IMR-90 (cell line): ENCODE measurements at regions of chr3 and their contacts with region 1.

Region 1: DNA sequence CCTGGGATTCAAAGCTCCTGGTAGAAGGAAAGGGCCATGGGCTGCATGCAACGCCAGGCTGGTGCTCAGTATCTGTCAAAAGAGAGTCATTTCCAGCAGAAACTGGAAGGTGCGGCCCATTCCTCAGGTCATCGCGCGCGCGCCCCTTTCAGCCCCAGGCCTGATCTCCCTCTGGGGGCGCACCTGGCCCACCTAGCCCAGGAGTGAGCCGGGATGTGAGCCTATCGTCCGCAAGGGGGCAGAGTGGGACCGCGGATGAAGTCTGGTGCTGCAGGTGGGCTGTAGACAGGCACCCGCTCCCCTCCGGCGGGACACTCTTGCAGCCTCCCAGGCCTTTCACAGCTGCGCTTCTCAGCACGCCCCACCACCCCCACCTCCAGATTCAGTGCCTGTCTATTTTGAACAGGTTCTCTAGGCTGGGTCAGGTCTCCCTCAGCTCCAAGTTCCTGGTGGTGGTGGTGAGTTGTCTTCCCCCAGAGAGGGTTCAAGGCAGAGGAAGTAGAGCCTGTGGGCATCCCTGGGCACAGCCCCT is 5.8 kb upstream of the RPL29 start:
- DNase-seq: peak; percentile 43
- ATAC-seq: peak; percentile 75
- H3K4me3 ChIP-seq: no peak overlapping the region
- H3K27ac ChIP-seq: no peak overlapping the region
- H3K4me1 ChIP-seq: peaks cover 11% of the 10 kb centered on the region
- H3K27me3 ChIP-seq: no peaks in the 10 kb centered on the region
- CTCF ChIP-seq: peak; percentile 96
- POLR2A ChIP-seq: peak; percentile 54; the same call in 1 of the 2 replicates
- RAD21 ChIP-seq: peak; percentile 97

Region 2: DNA sequence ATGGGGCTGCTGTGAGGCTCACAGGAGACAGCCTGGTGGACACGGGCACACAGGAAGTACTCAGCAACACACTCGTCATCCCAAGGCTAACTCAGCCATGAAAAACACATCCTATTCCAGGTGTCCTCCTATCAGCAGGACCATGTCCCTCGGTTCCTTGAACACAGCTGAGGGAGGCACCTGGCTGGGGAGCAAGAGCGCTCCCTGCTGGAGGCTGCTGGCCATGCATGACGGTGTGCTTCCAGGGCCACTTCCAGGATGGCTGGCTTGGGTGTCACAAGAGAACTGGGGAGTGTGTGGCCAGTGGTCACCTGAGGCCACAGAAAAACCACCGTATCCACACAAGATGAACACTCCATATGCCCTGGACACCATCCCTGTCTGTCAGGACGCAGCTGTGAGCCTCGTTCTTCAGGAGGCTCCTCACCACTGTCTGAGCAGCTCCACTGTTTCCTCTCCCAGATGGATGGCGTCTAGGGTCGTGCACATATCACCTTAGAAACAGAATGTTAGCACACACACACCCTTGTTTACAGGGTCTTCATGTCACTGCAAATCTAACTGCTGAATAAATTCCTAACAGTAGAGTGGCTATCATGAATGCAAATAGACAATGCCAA is 121.7 kb after region 1 on chr3:
- CTCF ChIA-PET with region 1: interaction called, 12 read pairs
- POLR2A ChIA-PET with region 1: no interaction called
- dilution Hi-C with region 1: no loop called
- in situ Hi-C with region 1: loop called (anchors 5 kb)
- intact Hi-C with region 1: loop called (anchors 1 kb)
- DNase-seq: peak; percentile 65
- ATAC-seq: peak; percentile 97
- H3K4me3 ChIP-seq: no peak overlapping the region
- H3K27ac ChIP-seq: no peak overlapping the region
- H3K4me1 ChIP-seq: peaks cover 2% of the 10 kb centered on the region
- H3K27me3 ChIP-seq: no peaks in the 10 kb centered on the region
- CTCF ChIP-seq: peak; percentile 94
- POLR2A ChIP-seq: 0 out of 2 replicates have a peak, but pooled peaks have one; percentile 40
- RAD21 ChIP-seq: peak; percentile 98

Region 3: DNA sequence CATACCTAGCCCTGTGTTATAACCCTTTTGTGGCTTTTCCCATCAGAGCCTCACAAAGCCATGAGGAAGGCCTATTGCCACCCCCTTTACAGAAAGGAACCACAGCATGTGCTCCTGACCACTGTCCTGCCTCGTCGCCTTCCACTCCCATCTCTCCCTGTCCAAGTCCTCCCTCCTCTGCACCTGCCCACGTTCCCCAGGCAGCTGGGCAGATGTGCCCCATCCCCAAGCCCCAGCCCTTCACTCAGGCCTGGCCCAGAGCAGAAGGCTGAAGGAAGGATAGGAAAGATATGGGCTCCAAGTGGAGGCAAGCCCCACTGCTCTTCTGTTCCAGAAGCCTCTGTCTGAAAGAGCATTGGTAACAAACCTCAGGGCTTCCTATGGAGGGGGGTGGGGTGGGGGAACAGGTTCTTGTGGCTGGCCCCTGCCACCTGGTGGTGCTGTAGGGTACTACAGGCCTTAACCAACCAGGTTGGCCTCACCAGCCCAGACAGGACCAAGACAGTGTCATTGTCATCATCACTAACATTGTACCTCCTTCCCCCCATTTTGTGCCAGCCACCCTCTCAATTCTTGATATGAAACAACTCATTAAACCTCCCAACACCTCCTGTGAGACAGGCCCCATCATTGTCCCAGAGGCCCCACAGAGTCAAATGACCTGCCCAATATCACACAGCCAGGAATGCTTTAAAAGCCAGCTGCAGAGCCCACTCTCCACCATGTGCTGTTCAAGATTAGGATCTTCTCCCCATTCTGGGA is 142.7 kb after region 1 on chr3:
- CTCF ChIA-PET with region 1: interaction called, 13 read pairs
- POLR2A ChIA-PET with region 1: interaction called, 3 read pairs
- dilution Hi-C with region 1: no loop called
- in situ Hi-C with region 1: no loop called
- intact Hi-C with region 1: loop called (anchors 1 kb)
- DNase-seq: peak; percentile 77
- ATAC-seq: peak; percentile 99
- H3K4me3 ChIP-seq: no peak overlapping the region
- H3K27ac ChIP-seq: no peak overlapping the region
- H3K4me1 ChIP-seq: peaks cover 5% of the 10 kb centered on the region
- H3K27me3 ChIP-seq: no peaks in the 10 kb centered on the region
- CTCF ChIP-seq: peak; percentile 93
- POLR2A ChIP-seq: no peak
- RAD21 ChIP-seq: peak; percentile 93

Region 4: DNA sequence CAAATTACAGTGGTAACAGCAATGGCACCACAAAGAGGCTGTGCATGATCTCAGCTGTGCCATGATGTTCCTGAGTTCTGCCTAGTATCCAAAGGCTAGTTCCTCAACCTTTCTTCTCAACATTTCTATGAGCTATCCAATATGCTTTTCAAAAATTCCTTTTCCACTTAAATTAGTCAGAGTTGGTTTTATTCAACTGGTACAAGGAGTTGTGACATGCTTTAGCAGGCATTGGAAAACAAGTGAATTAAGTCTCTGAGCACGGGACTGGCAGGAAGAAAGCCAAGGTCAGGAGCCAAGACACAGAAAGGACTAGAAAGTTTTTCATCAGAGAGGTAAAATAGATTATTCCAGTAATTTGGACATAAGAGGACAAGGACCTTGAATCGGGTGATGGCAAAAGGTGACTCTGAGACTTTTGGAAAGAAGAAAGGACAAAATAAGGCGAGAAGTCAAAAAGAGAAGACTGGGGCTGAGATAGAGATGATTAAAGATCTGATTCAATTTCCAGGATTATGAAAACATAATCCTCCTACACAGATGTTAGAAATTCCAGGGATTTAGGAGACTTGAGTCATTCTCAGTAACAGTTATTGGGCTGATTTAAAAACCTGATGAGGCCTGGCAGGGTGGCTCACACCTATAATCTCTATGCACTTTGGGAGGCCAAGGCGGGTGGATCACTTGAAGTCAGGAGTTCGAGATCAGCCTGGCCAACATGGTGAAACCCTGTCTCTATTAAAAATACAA is 648.1 kb after region 1 on chr3:
- CTCF ChIA-PET with region 1: no interaction called
- POLR2A ChIA-PET with region 1: no interaction called
- dilution Hi-C with region 1: no loop called
- in situ Hi-C with region 1: no loop called
- intact Hi-C with region 1: no loop called
- DNase-seq: peak; percentile 70
- ATAC-seq: peak; percentile 77
- H3K4me3 ChIP-seq: no peak overlapping the region
- H3K27ac ChIP-seq: peak overlapping the region; percentile 73; the same call in 1 of the 2 replicates
- H3K4me1 ChIP-seq: peaks cover 8% of the 10 kb centered on the region; the same call in 1 of the 2 replicates
- H3K27me3 ChIP-seq: no peaks in the 10 kb centered on the region
- CTCF ChIP-seq: no peak
- POLR2A ChIP-seq: no peak
- RAD21 ChIP-seq: no peak

Region 5: GRCh38 chr3:53150247-53151085 is 1149.0 kb after region 1 on chr3:
- CTCF ChIA-PET with region 1: no interaction called
- POLR2A ChIA-PET with region 1: no interaction called
- dilution Hi-C with region 1: no loop called
- in situ Hi-C with region 1: no loop called
- intact Hi-C with region 1: no loop called
- DNase-seq: peak; percentile 47
- ATAC-seq: no peak
- H3K4me3 ChIP-seq: no peak overlapping the region
- H3K27ac ChIP-seq: no peak overlapping the region
- H3K4me1 ChIP-seq: peaks cover 5% of the 10 kb centered on the region
- H3K27me3 ChIP-seq: peaks cover 13% of the 10 kb centered on the region
- CTCF ChIP-seq: no peak
- POLR2A ChIP-seq: no peak
- RAD21 ChIP-seq: no peak